Lower lobe of right lung (tissue), 2 donors: ENCODE measurements at regions of chr4 and their contacts with region 1.

Region 1: GRCh38 chr4:140359562-140360427 is 13.7 kb upstream of the SCOC start:
- DNase-seq: peak; percentile 69
- ATAC-seq: peak; percentile 91 to 94
- H3K4me3 ChIP-seq: no peak overlapping the region
- H3K27ac ChIP-seq: no peak overlapping the region
- H3K4me1 ChIP-seq: no peaks in the 10 kb centered on the region
- H3K27me3 ChIP-seq: no peaks in the 10 kb centered on the region
- CTCF ChIP-seq: peak; percentile 85

Region 2: DNA sequence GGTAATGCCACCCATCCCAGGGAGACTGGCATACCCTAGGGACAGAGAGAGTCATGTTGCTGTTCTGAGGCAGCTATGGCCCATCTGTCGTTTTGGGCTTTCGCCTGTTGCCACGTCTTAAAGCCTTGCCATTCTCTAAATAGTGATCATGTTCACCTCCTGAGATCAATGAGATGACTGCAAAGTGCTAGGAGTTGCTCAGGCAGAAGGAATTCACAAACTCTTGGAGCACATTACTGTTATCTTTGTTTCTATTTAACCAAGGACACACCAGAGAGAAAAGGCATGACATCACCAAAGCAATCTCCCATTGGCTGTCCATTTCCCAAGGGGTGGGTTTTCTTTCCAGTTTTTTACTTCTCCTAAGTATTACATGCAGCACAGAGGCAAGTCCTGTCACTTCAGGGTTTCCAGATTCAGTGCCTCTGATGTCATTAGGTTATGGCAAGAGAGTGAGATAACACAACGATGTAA is 766.7 kb before region 1 on chr4:
- intact Hi-C with region 1: loop called (anchors 10 kb)
- DNase-seq: no peak
- ATAC-seq: peak; percentile 11 to 60
- H3K4me3 ChIP-seq: no peak overlapping the region
- H3K27ac ChIP-seq: no peak overlapping the region
- H3K4me1 ChIP-seq: no peaks in the 10 kb centered on the region
- H3K27me3 ChIP-seq: no peaks in the 10 kb centered on the region
- CTCF ChIP-seq: no peak

Region 3: DNA sequence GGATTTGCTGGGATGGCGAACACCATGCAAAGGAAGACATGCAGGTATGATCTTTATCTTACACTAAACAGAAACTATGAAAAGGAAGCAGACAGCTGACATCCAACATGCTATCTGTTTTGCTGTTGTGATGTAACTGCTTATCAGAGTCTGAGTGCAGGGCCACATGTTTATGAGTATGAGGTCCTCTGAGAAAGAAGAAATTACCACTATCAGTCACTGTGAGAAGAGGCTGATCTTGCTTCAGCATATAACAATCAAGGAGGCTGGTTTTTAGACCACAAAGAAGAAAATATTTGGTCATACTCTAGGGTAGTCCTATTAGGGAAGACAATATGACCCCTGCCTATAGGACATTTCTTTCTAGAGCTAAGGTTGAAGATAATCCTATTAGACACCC is 49.2 kb after region 1 on chr4:
- intact Hi-C with region 1: no loop called
- DNase-seq: no peak
- ATAC-seq: no peak
- H3K4me3 ChIP-seq: no peak overlapping the region
- H3K27ac ChIP-seq: no peak overlapping the region
- H3K4me1 ChIP-seq: no peaks in the 10 kb centered on the region
- H3K27me3 ChIP-seq: no peaks in the 10 kb centered on the region
- CTCF ChIP-seq: no peak

Region 4: GRCh38 chr4:140423106-140423505 is 63.3 kb after region 1 on chr4:
- intact Hi-C with region 1: no loop called
- DNase-seq: no peak
- ATAC-seq: no peak
- H3K4me3 ChIP-seq: no peak overlapping the region
- H3K27ac ChIP-seq: no peak overlapping the region
- H3K4me1 ChIP-seq: peaks cover 15% of the 10 kb centered on the region
- H3K27me3 ChIP-seq: peaks cover 11% of the 10 kb centered on the region
- CTCF ChIP-seq: no peak